ENCODE measurements at regions of chr5 and their contacts with region 1.

Region 1: DNA sequence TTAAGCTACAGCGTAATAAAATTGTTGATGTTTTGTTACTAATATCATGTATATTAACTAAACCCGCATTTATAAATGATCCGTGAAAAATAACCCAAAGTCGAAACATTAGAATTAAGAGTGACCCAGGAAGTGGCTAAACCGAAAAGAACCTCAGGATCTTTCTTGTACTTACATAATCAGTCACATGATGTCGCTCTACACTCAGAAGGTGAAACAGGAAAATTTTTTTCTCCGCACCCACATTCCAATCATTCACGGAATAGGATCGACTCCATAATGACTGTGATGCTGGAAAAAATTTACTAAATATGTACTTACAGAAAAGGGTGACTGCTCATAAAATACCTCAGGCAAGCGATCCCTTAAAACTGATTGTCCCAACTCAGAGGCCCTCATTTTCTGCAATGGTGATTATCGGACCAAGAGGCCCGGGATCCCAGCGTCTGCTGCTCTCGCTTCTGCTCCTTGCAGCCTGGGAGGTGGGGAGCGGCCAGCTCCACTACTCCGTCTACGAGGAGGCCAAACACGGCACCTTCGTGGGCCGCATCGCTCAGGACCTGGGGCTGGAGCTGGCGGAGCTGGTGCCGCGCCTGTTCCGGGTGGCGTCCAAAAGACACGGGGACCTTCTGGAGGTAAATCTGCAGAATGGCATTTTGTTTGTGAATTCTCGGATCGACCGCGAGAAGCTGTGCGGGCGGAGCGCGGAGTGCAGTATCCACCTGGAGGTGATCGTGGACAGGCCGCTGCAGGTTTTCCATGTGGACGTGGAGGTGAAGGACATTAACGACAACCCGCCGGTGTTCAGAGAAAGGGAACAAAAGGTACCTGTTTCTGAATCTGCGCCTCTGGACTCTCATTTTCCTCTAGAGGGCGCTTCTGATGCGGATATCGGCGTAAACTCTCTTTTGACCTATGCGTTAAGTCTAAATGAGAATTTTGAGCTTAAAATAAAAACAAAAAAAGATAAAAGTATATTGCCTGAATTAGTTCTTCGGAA is at the start of gene PCDHA12:
- DNase-seq: no peak
- ATAC-seq: no peak
- H3K4me3 Mint-ChIP-seq: no peak within 1 kb of the TSS
- H3K27ac Mint-ChIP-seq: no peak within 1 kb of the TSS
- H3K4me1 Mint-ChIP-seq: no peaks in the 10 kb centered on the region
- H3K27me3 Mint-ChIP-seq: peaks cover 38% of the 10 kb centered on the region
- total RNA-seq, gene PCDHA12: not detected

Region 2: GRCh38 chr5:140767444-140767843 is 107.9 kb before region 1 on chr5:
- CTCF ChIA-PET with region 1: no interaction called
- POLR2A ChIA-PET with region 1: no interaction called
- intact Hi-C with region 1: no loop called
- DNase-seq: no peak
- ATAC-seq: no peak
- H3K4me3 Mint-ChIP-seq: no peak overlapping the region
- H3K27ac Mint-ChIP-seq: no peak overlapping the region
- H3K4me1 Mint-ChIP-seq: no peaks in the 10 kb centered on the region
- H3K27me3 Mint-ChIP-seq: no peaks in the 10 kb centered on the region

Region 3: GRCh38 chr5:140926443-140927227 is 51.3 kb after region 1 on chr5:
- CTCF ChIA-PET with region 1: interaction called, 3 read pairs
- POLR2A ChIA-PET with region 1: no interaction called
- intact Hi-C with region 1: loop called in 1 of 2 experiments (anchors 5 kb)
- DNase-seq: peak; percentile 70
- ATAC-seq: peak; percentile 55
- H3K4me3 Mint-ChIP-seq: peak overlapping the region; percentile 40
- H3K27ac Mint-ChIP-seq: no peak overlapping the region
- H3K4me1 Mint-ChIP-seq: peaks cover 7% of the 10 kb centered on the region
- H3K27me3 Mint-ChIP-seq: peaks cover 51% of the 10 kb centered on the region

Region 4: DNA sequence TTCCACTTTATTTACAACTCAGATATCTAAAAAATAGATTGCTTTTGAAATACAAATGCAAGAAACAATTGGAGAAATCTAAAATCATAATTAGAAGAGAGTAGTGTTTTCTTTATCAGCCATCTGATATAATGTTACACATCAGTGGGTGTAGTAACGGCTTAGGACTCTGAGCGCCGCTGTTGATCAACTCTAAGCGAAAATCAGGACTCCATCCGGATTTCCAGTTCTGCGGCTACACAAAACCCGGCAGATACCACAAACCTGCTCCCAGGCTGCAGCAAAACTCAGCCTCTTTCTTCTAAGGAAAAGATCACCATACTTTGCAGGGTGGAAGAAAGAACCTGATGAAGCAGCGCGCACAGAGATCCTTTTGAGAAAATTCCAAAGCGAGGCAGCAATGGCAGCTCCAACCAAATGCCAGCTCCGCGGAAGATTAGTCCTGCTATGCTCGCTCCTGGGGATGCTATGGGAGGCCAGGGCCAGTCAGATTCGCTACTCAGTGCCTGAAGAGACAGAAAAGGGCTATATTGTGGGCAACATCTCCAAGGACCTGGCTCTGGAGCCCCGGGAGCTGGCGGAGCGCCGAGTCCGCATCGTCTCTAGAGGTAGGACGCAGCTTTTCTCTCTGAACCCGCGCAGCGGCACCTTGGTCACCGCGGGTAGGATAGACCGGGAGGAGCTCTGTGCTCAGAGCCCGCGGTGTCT is 527.3 kb after region 1 on chr5 and contains the start of gene PCDHGA9:
- CTCF ChIA-PET with region 1: no interaction called
- POLR2A ChIA-PET with region 1: no interaction called
- intact Hi-C with region 1: loop called in 1 of 2 experiments (anchors 10 kb)
- DNase-seq: peak; percentile 46
- ATAC-seq: no peak
- H3K4me3 Mint-ChIP-seq: no peak within 1 kb of the TSS
- H3K27ac Mint-ChIP-seq: no peak within 1 kb of the TSS
- H3K4me1 Mint-ChIP-seq: no peaks in the 10 kb centered on the region
- H3K27me3 Mint-ChIP-seq: peaks cover 56% of the 10 kb centered on the region
- total RNA-seq, gene PCDHGA9: 0.09 TPM in 1 of 2 experiments, not detected in the other

Measured in activated CD4-positive, alpha-beta T cell treated with anti-CD3 and anti-CD28 coated beads for 36 hours (primary cell).